Mammary epithelial cell (primary cell): ENCODE measurements at regions of chr6 and their contacts with region 1.

Region 1: DNA sequence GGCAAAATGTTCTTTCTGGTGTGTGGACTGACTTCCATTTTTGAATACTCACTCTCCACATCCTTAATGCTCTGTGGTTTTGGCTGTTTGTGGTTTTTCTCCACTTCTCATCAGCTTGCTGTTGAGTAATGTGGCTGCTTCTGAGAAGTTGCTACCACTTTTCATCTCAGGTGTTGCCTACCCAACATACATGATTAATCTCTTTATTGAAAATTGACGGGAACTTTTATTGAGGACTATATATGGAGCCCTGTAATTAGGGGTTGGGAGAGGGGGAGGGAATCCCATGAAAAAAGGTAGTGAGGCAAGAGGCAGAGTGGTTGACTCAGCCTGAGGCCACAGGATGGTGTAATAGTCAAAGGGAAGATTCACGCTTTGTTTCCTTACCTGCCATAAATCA is 17.6 kb downstream of the IL22RA2 start:
- DNase-seq: peak; percentile 93
- H3K4me3 ChIP-seq: no peak overlapping the region
- H3K27ac ChIP-seq: no peak overlapping the region
- H3K4me1 ChIP-seq: peaks cover 39% of the 10 kb centered on the region
- H3K27me3 ChIP-seq: no peaks in the 10 kb centered on the region
- CTCF ChIP-seq: no peak

Region 2: GRCh38 chr6:136607932-136608772 is 547.7 kb before region 1 on chr6:
- CTCF ChIA-PET with region 1: no interaction called
- dilution Hi-C with region 1: no loop called
- in situ Hi-C with region 1: no loop called
- intact Hi-C with region 1: no loop called
- DNase-seq: peak; percentile 76
- H3K4me3 ChIP-seq: no peak overlapping the region
- H3K27ac ChIP-seq: peak overlapping the region; percentile 35
- H3K4me1 ChIP-seq: peaks cover 35% of the 10 kb centered on the region
- H3K27me3 ChIP-seq: no peaks in the 10 kb centered on the region
- CTCF ChIP-seq: peak; percentile 94 to 97

Region 3: DNA sequence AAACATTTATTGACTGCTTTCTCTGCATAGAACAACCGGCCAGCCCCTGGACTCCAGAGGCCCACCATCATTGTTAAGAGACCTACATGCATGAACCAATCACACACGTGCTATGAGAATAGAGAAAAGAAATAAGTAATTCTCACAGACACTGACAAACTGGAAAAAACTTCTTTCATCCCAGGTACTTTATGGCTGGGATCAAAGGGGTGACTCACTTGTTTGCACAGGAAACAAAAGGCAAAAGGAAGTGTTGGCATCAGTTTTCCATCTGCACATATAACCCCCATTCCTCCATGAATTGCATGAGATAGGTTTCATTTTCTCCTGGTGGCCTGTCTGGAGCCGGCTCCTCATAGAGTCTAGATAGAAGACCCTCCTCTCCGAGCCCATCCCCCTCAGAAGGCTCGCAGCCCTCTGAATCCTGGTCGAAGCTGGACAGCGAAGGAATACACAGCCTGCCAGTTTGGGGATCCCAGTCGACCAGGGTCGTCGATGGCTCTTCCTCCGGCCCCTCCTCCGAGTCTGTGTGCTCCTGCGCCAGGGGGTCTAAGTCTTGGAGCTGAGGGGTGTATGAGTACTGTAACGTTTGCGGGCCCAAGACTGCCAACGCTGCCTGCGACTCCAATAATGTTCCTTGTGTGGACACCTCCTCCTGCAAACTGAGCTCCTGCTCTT is 154.4 kb before region 1 on chr6:
- CTCF ChIA-PET with region 1: no interaction called
- dilution Hi-C with region 1: no loop called
- in situ Hi-C with region 1: no loop called
- intact Hi-C with region 1: no loop called
- DNase-seq: no peak
- H3K4me3 ChIP-seq: no peak overlapping the region
- H3K27ac ChIP-seq: no peak overlapping the region
- H3K4me1 ChIP-seq: peaks cover 9% of the 10 kb centered on the region
- H3K27me3 ChIP-seq: peaks cover 6% of the 10 kb centered on the region
- CTCF ChIP-seq: no peak

Region 4: DNA sequence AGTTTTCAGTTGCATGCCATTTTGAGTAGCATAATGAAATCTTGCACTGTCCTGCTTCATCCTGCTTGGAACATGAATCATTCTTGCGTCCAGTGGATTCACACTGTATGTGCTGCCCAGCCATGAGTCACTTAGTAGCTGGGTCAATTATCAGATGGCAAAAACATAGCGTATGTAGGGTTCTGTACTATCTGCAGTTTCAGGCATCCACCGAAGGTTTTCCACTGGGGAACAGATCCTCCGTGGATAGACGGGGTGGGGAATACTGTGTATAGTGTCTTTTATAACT is 43.8 kb before region 1 on chr6:
- CTCF ChIA-PET with region 1: no interaction called
- dilution Hi-C with region 1: no loop called
- in situ Hi-C with region 1: no loop called
- intact Hi-C with region 1: no loop called
- DNase-seq: peak; percentile 80
- H3K4me3 ChIP-seq: no peak overlapping the region
- H3K27ac ChIP-seq: no peak overlapping the region
- H3K4me1 ChIP-seq: peaks cover 13% of the 10 kb centered on the region
- H3K27me3 ChIP-seq: no peaks in the 10 kb centered on the region
- CTCF ChIP-seq: no peak

Region 5: GRCh38 chr6:137202078-137202477 is 46.2 kb after region 1 on chr6:
- CTCF ChIA-PET with region 1: no interaction called
- dilution Hi-C with region 1: no loop called
- in situ Hi-C with region 1: no loop called
- intact Hi-C with region 1: loop called (anchors 5 kb)
- DNase-seq: no peak
- H3K4me3 ChIP-seq: no peak overlapping the region
- H3K27ac ChIP-seq: no peak overlapping the region
- H3K4me1 ChIP-seq: no peaks in the 10 kb centered on the region
- H3K27me3 ChIP-seq: no peaks in the 10 kb centered on the region
- CTCF ChIP-seq: peak; percentile 67 to 81